Naive thymus-derived CD4-positive, alpha-beta T cell (primary cell): ENCODE measurements at regions of chr9 and their contacts with region 1.

Region 1: GRCh38 chr9:272251-273213 is 57.9 kb downstream of the DOCK8 start:
- DNase-seq: peak; percentile 20 to 91 (median 85)
- ATAC-seq: peak; percentile 93
- H3K4me3 ChIP-seq: peak overlapping the region; percentile 56
- H3K4me3 Mint-ChIP-seq: peak overlapping the region in 9 of 10 donors; percentile 86 to 99 (median 92)
- H3K27ac ChIP-seq: peak overlapping the region; percentile 88
- H3K27ac Mint-ChIP-seq: peak overlapping the region in 7 of 9 donors; percentile 83 to 99 (median 94)
- H3K4me1 ChIP-seq: peaks cover 33 to 36% of the 10 kb centered on the region in 2 donors
- H3K4me1 Mint-ChIP-seq: peaks cover 30 to 66% (median 55%) of the 10 kb centered on the region in 7 donors
- H3K27me3 ChIP-seq: no peaks in the 10 kb centered on the region
- H3K27me3 Mint-ChIP-seq: no peaks in the 10 kb centered on the region

Region 2: GRCh38 chr9:214648-215493 is 57.7 kb before region 1 on chr9 and contains the start of gene DOCK8:
- CTCF ChIA-PET with region 1: interaction called, 5 read pairs
- POLR2A ChIA-PET with region 1: interaction called, 12 read pairs
- intact Hi-C with region 1: loop called (anchors 1 kb)
- DNase-seq: peak; percentile 27 to 77 (median 37)
- ATAC-seq: peak; percentile 85
- H3K4me3 ChIP-seq: peak within 1 kb of the TSS; percentile 56
- H3K4me3 Mint-ChIP-seq: peak within 1 kb of the TSS; percentile 81 to 92 (median 86)
- H3K27ac ChIP-seq: no peak within 1 kb of the TSS
- H3K27ac Mint-ChIP-seq: peak within 1 kb of the TSS in 5 of 9 donors; percentile 11 to 85 (median 74)
- H3K4me1 ChIP-seq: peaks cover 0 to 6% of the 10 kb centered on the region in 2 donors
- H3K4me1 Mint-ChIP-seq: peaks cover 0 to 24% (median 7%) of the 10 kb centered on the region in 7 donors
- H3K27me3 ChIP-seq: no peaks in the 10 kb centered on the region
- H3K27me3 Mint-ChIP-seq: peaks cover 9 to 19% (median 12%) of the 10 kb centered on the region in 5 donors
- total RNA-seq, gene DOCK8: 162 to 294 (median 280) TPM

Region 3: DNA sequence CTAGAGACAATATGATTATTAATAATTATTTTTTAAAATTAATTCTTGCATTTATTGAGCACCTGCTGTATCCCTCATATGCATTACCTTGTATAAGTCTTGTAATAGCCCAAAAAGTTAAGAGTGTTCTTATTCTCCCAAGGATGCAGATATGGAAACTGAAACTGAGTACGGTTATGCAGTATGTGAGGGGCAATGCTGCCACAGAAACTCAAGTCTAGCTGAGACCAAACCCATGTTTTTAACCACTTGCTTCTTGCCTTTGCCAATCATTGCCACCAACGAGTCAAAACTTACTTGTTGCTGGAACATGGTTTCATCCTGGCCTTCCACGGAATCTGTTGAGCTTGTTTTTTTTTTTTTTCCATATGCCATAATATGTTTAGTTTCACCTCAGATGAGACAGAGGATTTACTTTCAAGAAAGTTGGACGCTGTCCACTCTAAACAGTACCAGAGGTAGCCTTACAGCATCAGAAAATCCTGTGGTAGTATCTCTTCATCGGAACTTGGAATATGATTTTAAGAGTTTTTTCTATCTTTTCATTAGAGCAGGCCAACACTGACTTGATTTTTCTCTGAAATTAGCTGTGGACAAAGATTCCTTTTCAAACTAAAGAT is 30.0 kb before region 1 on chr9:
- CTCF ChIA-PET with region 1: no interaction called
- POLR2A ChIA-PET with region 1: interaction called, 3 read pairs
- intact Hi-C with region 1: loop called in 1 of 2 experiments (anchors 1 kb)
- DNase-seq: no peak
- ATAC-seq: no peak
- H3K4me3 ChIP-seq: no peak overlapping the region
- H3K4me3 Mint-ChIP-seq: peak overlapping the region in 1 of 10 donors; percentile 53
- H3K27ac ChIP-seq: no peak overlapping the region
- H3K27ac Mint-ChIP-seq: peak overlapping the region in 1 of 9 donors; percentile 73
- H3K4me1 ChIP-seq: peaks cover 3 to 9% of the 10 kb centered on the region in 2 donors
- H3K4me1 Mint-ChIP-seq: peaks cover 0 to 49% (median 5%) of the 10 kb centered on the region in 7 donors
- H3K27me3 ChIP-seq: no peaks in the 10 kb centered on the region
- H3K27me3 Mint-ChIP-seq: peaks cover 0 to 4% (median 0%) of the 10 kb centered on the region in 5 donors

Region 4: GRCh38 chr9:248278-248961 is 24.1 kb before region 1 on chr9:
- CTCF ChIA-PET with region 1: no interaction called
- POLR2A ChIA-PET with region 1: interaction called, 3 read pairs
- intact Hi-C with region 1: loop called in 1 of 2 experiments (anchors 1 kb)
- DNase-seq: no peak
- ATAC-seq: no peak
- H3K4me3 ChIP-seq: no peak overlapping the region
- H3K4me3 Mint-ChIP-seq: peak overlapping the region in 1 of 10 donors; percentile 41
- H3K27ac ChIP-seq: no peak overlapping the region
- H3K27ac Mint-ChIP-seq: peak overlapping the region in 2 of 9 donors; percentile 32 to 61
- H3K4me1 ChIP-seq: no peaks in the 10 kb centered on the region
- H3K4me1 Mint-ChIP-seq: peaks cover 7 to 41% (median 11%) of the 10 kb centered on the region in 7 donors
- H3K27me3 ChIP-seq: no peaks in the 10 kb centered on the region
- H3K27me3 Mint-ChIP-seq: peaks cover 0 to 8% (median 0%) of the 10 kb centered on the region in 5 donors

Region 5: DNA sequence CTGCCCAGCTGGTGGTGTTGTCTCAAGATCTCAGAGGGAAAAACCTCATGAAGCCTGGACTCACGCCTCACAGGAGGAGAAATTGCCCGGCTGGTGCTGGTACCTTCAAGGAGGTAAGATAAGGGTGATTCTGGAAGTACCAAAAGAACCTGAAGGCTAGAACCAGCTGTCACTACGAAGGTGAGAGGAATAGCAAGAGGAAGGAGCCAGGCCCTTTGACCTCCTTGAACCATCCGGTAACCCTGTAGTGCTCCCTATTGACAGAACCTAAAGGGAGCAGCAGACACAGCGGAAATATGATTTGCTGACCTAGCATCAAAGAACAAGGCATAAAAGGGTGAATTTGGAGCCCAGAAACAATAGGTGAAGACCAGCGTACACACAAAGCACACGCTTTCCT is 34.4 kb after region 1 on chr9:
- CTCF ChIA-PET with region 1: no interaction called
- POLR2A ChIA-PET with region 1: interaction called, 3 read pairs
- intact Hi-C with region 1: loop called in 1 of 2 experiments (anchors 2 kb)
- DNase-seq: peak; percentile 12 to 65 (median 52)
- ATAC-seq: peak; percentile 94
- H3K4me3 ChIP-seq: no peak overlapping the region
- H3K4me3 Mint-ChIP-seq: no peak overlapping the region
- H3K27ac ChIP-seq: no peak overlapping the region
- H3K27ac Mint-ChIP-seq: peak overlapping the region in 6 of 9 donors; percentile 3 to 69 (median 43)
- H3K4me1 ChIP-seq: no peaks in the 10 kb centered on the region
- H3K4me1 Mint-ChIP-seq: peaks cover 0 to 16% (median 7%) of the 10 kb centered on the region in 7 donors
- H3K27me3 ChIP-seq: no peaks in the 10 kb centered on the region
- H3K27me3 Mint-ChIP-seq: no peaks in the 10 kb centered on the region

Region 6: DNA sequence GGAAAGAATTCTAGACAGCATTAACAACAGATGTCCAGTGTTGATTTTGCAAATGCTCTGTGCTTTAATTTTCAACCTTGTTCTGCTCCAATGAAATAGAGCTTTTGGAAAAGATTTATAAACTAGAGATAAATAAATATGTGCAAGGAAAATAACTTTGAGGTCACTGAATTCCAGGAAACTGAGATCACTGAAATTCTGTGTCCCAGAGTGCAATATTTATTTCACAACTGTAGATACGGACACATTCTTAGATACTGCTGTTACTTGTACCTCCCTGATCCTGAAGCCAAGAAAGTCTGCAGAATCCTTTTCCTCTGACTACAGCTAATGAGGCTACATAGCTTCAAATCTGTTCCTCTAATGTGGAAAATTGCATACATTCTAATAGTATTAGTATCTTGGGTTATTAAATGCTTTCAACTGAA is 165.1 kb after region 1 on chr9:
- CTCF ChIA-PET with region 1: no interaction called
- POLR2A ChIA-PET with region 1: no interaction called
- intact Hi-C with region 1: no loop called
- DNase-seq: no peak
- ATAC-seq: no peak
- H3K4me3 ChIP-seq: no peak overlapping the region
- H3K4me3 Mint-ChIP-seq: no peak overlapping the region
- H3K27ac ChIP-seq: no peak overlapping the region
- H3K27ac Mint-ChIP-seq: peak overlapping the region in 5 of 9 donors; percentile 21 to 77 (median 53)
- H3K4me1 ChIP-seq: no peaks in the 10 kb centered on the region
- H3K4me1 Mint-ChIP-seq: peaks cover 0 to 7% (median 0%) of the 10 kb centered on the region in 7 donors
- H3K27me3 ChIP-seq: no peaks in the 10 kb centered on the region
- H3K27me3 Mint-ChIP-seq: no peaks in the 10 kb centered on the region

Region 7: GRCh38 chr9:469672-470551 is 197.4 kb after region 1 on chr9:
- CTCF ChIA-PET with region 1: no interaction called
- POLR2A ChIA-PET with region 1: no interaction called
- intact Hi-C with region 1: loop called in 1 of 2 experiments (anchors 2 kb)
- DNase-seq: peak; percentile 82 to 92 (median 89)
- ATAC-seq: peak; percentile 93
- H3K4me3 ChIP-seq: peak overlapping the region; percentile 84
- H3K4me3 Mint-ChIP-seq: peak overlapping the region; percentile 92 to 99 (median 97)
- H3K27ac ChIP-seq: peak overlapping the region; percentile 75
- H3K27ac Mint-ChIP-seq: peak overlapping the region; percentile 88 to 99 (median 94)
- H3K4me1 ChIP-seq: peaks cover 0 to 6% of the 10 kb centered on the region in 2 donors
- H3K4me1 Mint-ChIP-seq: peaks cover 17 to 32% (median 27%) of the 10 kb centered on the region in 7 donors
- H3K27me3 ChIP-seq: no peaks in the 10 kb centered on the region
- H3K27me3 Mint-ChIP-seq: no peaks in the 10 kb centered on the region

Region 8: DNA sequence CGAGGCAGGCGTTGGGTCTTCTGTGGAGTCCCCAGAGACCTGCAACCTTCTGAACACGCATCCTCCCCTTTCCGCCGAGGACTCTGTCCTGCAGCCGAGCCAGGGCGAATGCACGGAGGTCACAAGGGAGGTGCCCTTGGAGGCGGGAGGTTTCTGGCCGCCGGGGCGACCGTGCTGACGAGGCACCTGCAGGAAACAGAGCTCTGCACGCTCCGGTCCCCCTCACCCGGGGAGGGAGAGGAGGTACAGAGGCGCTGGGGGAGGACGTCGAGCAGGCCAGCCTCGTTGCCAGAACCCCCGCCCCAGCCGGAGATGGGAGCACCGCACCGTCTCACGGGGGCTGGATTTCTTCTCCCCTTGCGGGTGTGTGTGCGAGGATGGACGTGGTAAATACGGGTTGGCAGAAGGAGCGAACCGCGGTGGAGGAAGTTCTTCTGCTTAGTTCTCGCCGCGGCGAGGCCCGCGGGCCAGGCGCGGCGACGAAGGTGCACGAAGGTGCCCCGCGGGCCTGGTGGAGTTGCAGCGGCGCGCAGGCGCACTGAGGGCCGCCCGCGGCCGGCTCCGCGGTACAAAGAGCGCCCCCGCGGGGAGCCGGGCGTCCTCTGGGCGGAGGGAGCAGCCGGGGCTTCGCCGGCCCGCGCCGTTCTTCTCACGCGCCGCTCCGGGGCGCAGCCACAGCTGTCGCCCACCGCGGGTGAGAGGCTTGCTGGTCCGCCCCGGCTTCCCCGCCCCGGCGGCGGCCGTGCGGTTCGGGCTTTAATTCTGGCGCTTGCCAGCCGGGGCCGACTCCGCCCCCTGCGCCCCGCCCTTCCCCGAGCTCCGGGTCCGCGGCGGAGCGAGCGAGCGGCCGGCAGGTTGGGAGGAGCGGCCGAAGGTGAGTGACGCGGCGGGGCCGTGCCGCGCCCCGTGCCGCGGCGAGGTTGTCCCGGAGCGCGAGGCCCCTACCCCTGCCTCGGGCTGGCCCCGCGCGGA is 231.6 kb after region 1 on chr9:
- CTCF ChIA-PET with region 1: no interaction called
- POLR2A ChIA-PET with region 1: no interaction called
- intact Hi-C with region 1: loop called in 1 of 2 experiments (anchors 10 kb)
- DNase-seq: peak; percentile 66 to 86 (median 82)
- ATAC-seq: peak; percentile 90
- H3K4me3 ChIP-seq: peak within 1 kb of the TSS; percentile 74
- H3K4me3 Mint-ChIP-seq: peak within 1 kb of the TSS; percentile 81 to 96 (median 90)
- H3K27ac ChIP-seq: peak within 1 kb of the TSS; percentile 56
- H3K27ac Mint-ChIP-seq: peak within 1 kb of the TSS; percentile 59 to 95 (median 88)
- H3K4me1 ChIP-seq: peaks cover 0 to 9% of the 10 kb centered on the region in 2 donors
- H3K4me1 Mint-ChIP-seq: peaks cover 7 to 32% (median 24%) of the 10 kb centered on the region in 7 donors
- H3K27me3 ChIP-seq: peaks cover 0 to 4% of the 10 kb centered on the region in 2 donors
- H3K27me3 Mint-ChIP-seq: peaks cover 0 to 54% (median 13%) of the 10 kb centered on the region in 5 donors